Pancreas (tissue), 10 donors: ENCODE measurements at regions of chr7 and their contacts with region 1.

Region 1: DNA sequence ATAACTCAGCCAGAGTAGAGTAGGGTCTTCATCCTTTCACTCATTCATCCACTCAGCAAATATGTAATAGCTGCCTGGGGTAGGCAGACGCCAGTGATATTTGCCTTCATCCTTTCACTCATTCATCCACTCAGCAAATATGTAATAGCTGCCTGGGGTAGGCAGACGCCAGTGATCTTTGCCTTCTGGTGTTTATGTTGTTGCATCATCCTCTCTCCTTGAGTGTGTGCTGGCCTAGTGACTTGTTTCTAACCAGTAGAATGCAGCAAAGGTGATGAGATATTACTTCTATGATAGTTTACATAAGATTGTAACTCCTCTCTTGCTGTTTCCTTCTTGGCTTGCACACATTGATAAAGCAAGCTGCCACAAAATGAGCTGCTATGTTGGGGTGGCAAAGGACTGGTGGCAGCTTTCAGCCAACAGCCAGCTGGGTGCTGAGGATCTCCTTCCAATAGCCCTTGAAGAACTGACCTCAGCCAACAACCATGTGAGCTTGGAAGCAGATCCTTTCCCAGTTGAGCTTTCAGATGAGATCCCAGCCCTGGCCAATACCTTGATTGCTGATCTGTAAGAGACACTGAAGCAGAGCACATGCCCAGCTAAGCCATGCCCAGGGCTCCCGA is 23.2 kb upstream of the MTPN start:
- DNase-seq: no peak
- ATAC-seq: no peak
- H3K4me3 ChIP-seq: no peak overlapping the region
- H3K27ac ChIP-seq: no peak overlapping the region
- H3K4me1 ChIP-seq: no peaks in the 10 kb centered on the region
- H3K27me3 ChIP-seq: no peaks in the 10 kb centered on the region
- CTCF ChIP-seq: no peak

Region 2: DNA sequence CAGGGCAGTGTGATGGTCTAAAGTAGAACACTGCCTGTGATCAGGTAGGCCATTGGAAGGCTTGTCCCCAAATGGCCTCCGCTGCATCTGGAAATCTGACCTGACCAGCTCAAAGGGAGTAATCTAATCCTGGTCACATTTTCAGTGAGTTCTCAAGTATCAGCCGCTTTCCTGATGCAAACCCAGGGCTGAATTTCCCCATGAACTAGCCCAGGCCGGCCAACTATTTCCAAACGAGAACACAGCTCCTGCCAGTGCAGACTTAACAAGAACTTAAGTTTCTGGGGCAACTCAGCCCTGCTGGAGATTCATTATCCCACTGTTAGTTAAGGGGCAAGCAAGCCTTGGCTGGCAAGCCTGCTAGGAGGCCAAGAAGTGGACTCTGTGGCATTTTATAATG is 192.2 kb before region 1 on chr7:
- intact Hi-C with region 1: loop called in 1 of 3 experiments (anchors 5 kb)
- DNase-seq: no peak
- ATAC-seq: peak in 1 of 4 donors; percentile 40
- H3K4me3 ChIP-seq: no peak overlapping the region
- H3K27ac ChIP-seq: no peak overlapping the region
- H3K4me1 ChIP-seq: no peaks in the 10 kb centered on the region
- H3K27me3 ChIP-seq: no peaks in the 10 kb centered on the region
- CTCF ChIP-seq: no peak

Region 3: DNA sequence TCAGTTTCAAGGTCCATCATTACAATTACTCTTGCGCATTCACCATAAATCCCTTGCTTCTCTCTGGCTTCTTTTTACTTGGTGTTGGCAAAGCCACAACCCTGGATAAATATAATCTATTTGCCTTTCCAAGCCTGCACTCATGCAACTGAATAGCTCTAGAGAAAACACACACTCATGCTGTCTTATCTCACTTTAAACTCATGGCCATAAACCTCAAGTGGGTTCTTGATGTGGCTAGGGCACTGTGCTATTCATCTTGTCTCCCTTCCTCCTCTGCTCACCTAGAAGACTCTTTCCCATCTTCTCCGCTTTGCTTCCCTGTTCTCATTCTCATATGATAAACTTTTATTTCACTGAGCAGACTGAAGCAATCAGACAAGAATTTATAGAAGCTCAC is 142.2 kb after region 1 on chr7:
- intact Hi-C with region 1: no loop called
- DNase-seq: no peak
- ATAC-seq: no peak
- H3K4me3 ChIP-seq: no peak overlapping the region
- H3K27ac ChIP-seq: no peak overlapping the region
- H3K4me1 ChIP-seq: no peaks in the 10 kb centered on the region
- H3K27me3 ChIP-seq: peaks cover 0 to 3% (median 0%) of the 10 kb centered on the region in 4 donors
- CTCF ChIP-seq: no peak